Right cardiac atrium (tissue), 5 donors: ENCODE measurements at regions of chr12 and their contacts with region 1.

Region 1: DNA sequence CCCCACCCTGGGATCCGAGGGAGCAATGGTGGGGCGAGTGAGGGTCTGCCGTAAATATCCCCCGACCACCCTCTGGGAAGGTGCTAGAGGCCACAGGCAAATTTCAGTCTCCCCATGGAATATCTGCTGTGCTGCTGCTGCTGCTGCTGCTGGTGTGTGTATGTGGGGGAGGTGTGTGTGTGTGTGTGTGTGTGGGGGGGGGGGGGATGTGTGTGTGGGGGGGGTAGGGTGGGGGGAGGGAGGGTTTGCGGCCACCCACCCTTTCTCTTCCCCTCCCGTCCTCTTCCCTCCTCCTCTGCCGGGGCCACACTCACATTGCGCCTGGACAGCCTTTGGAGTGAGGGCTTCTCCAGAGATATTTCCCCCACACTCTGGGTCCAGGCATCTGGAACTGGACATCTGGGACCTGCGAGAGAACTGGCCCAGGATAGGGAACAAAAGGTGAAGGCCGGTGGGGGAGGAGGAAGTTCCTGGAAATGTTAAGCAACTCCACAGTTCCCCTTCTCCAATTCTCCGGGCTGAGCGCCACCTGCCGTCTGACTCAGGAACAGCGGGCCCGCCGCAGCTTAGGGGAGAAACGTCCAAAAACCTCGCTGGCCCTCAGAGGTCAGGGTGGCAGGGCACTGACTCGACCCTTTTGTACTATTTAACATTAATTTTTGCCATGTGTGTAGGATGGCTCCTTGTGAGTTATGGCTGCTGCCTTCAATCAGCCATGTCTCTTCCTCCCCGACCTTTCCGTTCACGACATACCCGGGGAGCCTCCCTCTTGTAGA is at the start of gene C1RL:
- DNase-seq: peak; percentile 89 to 97 (median 96)
- ATAC-seq: peak; percentile 86 to 88
- H3K4me3 ChIP-seq: peak within 1 kb of the TSS; percentile 55
- H3K27ac ChIP-seq: peak within 1 kb of the TSS; percentile 90
- H3K4me1 ChIP-seq: peaks cover 2% of the 10 kb centered on the region
- H3K27me3 ChIP-seq: no peaks in the 10 kb centered on the region
- total RNA-seq, gene C1RL: 17.6 to 29.6 (median 21.6) TPM

Region 2: GRCh38 chr12:6697584-6698351 is 411.2 kb before region 1 on chr12:
- intact Hi-C with region 1: no loop called
- DNase-seq: no peak
- ATAC-seq: peak in 1 of 2 donors; percentile 42
- H3K4me3 ChIP-seq: no peak overlapping the region
- H3K27ac ChIP-seq: no peak overlapping the region
- H3K4me1 ChIP-seq: no peaks in the 10 kb centered on the region
- H3K27me3 ChIP-seq: no peaks in the 10 kb centered on the region

Region 3: DNA sequence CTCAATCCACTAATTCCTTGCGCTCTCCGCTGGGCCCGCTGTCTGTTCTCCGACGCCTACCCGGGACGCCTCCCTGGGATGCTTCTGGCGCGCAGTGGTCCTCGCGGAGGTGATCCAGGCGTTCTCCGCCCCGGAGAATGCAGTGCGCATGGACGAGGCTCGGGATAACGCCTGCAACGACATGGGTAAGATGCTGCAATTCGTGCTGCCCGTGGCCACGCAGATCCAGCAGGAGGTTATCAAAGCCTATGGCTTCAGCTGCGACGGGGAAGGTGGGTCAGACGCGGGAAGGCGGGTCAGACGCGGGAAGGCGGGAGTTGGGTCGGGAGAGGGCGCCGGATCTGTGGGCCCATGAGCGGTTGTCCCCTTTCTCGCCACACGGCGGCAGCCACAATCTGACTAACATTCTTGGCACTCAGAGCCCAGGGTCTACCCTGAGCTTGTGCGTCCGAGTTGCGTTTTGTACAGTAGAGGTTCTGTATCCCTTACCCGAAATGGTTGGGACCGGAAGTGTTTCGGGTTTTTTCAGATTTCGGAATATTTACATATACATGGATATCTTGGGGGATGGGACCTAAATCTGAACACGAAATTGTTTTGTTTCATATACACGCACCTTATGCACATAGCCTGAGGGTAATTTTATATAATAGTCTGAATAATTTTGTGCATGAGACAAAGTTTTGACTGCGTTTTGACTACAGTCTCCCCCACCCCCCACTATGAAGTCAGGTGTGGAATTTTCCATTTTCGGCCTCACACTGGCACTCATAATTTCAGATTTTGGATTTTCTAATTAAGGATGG is 164.4 kb before region 1 on chr12:
- intact Hi-C with region 1: loop called in 2 of 4 experiments (anchors 5 to 10 kb)
- DNase-seq: peak; percentile 93 to 97 (median 97)
- ATAC-seq: peak; percentile 78 to 79
- H3K4me3 ChIP-seq: peak overlapping the region; percentile 35
- H3K27ac ChIP-seq: peak overlapping the region; percentile 96
- H3K4me1 ChIP-seq: no peaks in the 10 kb centered on the region
- H3K27me3 ChIP-seq: no peaks in the 10 kb centered on the region

Region 4: DNA sequence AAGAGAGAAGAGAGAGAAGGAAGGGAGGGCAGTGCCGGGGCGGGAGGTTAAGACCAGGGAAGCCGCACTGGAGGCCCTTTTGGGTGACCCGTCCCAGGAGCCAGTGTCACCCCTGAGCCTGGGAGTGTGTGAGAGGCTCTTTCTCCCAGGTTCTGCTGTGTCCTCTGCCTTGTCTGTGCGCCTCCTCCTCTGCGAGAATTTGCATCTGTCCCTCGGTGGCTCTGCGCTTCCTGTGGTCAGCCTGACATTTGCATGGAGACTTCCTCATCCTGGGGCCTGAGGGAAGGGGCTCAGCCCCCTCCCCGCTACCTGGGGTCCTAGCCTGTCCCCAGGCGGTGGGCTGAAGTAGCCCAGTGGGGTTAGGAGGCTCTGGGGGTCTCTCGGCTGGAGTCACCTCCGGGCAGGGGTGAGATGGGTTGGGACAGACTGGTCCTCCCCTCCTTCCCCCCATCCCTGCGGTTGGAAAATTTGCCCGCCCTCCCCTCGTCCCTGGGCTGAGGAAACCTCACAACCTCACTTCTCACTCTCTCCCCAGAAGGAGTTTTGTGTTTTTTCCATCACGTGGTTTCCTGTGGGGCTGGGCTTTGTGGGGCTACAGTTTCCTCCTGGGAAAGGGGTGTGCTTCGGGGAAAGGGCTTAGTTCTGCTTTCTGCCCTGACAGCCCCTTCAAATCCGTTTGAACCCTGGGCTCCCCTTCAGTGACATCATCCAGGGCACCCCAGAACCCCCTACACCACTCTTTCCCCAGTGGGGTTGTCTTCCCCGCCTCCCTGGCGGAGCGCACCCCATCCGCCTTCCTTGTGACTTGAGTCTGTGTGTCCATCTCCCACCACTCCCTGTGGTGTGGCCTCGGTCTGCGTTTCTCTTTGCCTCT is 155.3 kb before region 1 on chr12:
- intact Hi-C with region 1: loop called in 3 of 4 experiments (anchors 5 to 10 kb)
- DNase-seq: peak; percentile 48 to 83 (median 75)
- ATAC-seq: peak; percentile 42 to 69
- H3K4me3 ChIP-seq: no peak overlapping the region
- H3K27ac ChIP-seq: no peak overlapping the region
- H3K4me1 ChIP-seq: no peaks in the 10 kb centered on the region
- H3K27me3 ChIP-seq: no peaks in the 10 kb centered on the region

Region 5: GRCh38 chr12:7060353-7060954 is 48.5 kb before region 1 on chr12 and contains the start of gene C1S:
- intact Hi-C with region 1: loop called in 2 of 4 experiments (anchors 5 kb)
- DNase-seq: peak; percentile 77 to 86 (median 84)
- ATAC-seq: peak; percentile 98
- H3K4me3 ChIP-seq: peak within 1 kb of the TSS; percentile 44
- H3K27ac ChIP-seq: peak within 1 kb of the TSS; percentile 92
- H3K4me1 ChIP-seq: no peaks in the 10 kb centered on the region
- H3K27me3 ChIP-seq: no peaks in the 10 kb centered on the region
- total RNA-seq, gene C1S: 162 to 288 (median 238) TPM